ENCODE measurements at regions of chr7 and their contacts with region 1.

Region 1: GRCh38 chr7:73738612-73739374 is at the start of gene ABHD11:
- DNase-seq: peak; percentile 89 to 100
- H3K4me3 ChIP-seq: peak within 1 kb of the TSS; percentile 96
- H3K27ac ChIP-seq: peak within 1 kb of the TSS; percentile 100
- H3K4me1 ChIP-seq: peaks cover 71% of the 10 kb centered on the region
- H3K27me3 ChIP-seq: no peaks in the 10 kb centered on the region
- CTCF ChIP-seq: no peak
- total RNA-seq, gene ABHD11: 74.4 and 92.6 TPM in 2 replicates

Region 2: GRCh38 chr7:73329861-73330581 is 408.8 kb before region 1 on chr7:
- CTCF ChIA-PET with region 1: no interaction called
- POLR2A ChIA-PET with region 1: no interaction called
- intact Hi-C with region 1: no loop called
- DNase-seq: no peak
- H3K4me3 ChIP-seq: no peak overlapping the region
- H3K27ac ChIP-seq: no peak overlapping the region
- H3K4me1 ChIP-seq: no peaks in the 10 kb centered on the region
- H3K27me3 ChIP-seq: no peaks in the 10 kb centered on the region
- CTCF ChIP-seq: no peak

Region 3: GRCh38 chr7:73621168-73622063 is 117.4 kb before region 1 on chr7:
- CTCF ChIA-PET with region 1: no interaction called
- POLR2A ChIA-PET with region 1: interaction called, 36 read pairs
- intact Hi-C with region 1: no loop called
- DNase-seq: no peak
- H3K4me3 ChIP-seq: no peak overlapping the region
- H3K27ac ChIP-seq: no peak overlapping the region
- H3K4me1 ChIP-seq: no peaks in the 10 kb centered on the region
- H3K27me3 ChIP-seq: no peaks in the 10 kb centered on the region
- CTCF ChIP-seq: no peak

Region 4: DNA sequence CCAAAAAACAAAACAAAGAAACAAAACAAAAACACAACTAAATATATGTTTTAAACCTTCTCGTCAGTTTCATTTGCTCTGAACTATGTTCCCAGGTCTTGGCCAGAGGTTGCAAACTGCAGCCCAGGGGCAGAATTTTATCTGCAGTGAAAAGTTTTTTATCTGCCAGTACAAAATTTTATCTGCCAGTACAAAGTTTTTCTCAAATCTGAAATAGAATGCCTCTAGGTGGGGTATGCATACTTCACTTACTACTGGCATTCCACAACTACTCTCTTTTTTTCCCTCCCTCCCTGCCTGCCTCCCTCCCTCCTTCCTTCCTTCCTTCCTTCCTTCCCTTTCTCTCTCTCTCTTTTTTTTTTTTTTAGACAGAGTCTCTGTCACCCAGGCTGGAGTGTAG is 40.7 kb after region 1 on chr7:
- CTCF ChIA-PET with region 1: interaction called, 3 read pairs
- POLR2A ChIA-PET with region 1: interaction called, 23 read pairs
- intact Hi-C with region 1: no loop called
- DNase-seq: no peak
- H3K4me3 ChIP-seq: no peak overlapping the region
- H3K27ac ChIP-seq: no peak overlapping the region
- H3K4me1 ChIP-seq: peaks cover 7% of the 10 kb centered on the region
- H3K27me3 ChIP-seq: no peaks in the 10 kb centered on the region
- CTCF ChIP-seq: no peak

Region 5: DNA sequence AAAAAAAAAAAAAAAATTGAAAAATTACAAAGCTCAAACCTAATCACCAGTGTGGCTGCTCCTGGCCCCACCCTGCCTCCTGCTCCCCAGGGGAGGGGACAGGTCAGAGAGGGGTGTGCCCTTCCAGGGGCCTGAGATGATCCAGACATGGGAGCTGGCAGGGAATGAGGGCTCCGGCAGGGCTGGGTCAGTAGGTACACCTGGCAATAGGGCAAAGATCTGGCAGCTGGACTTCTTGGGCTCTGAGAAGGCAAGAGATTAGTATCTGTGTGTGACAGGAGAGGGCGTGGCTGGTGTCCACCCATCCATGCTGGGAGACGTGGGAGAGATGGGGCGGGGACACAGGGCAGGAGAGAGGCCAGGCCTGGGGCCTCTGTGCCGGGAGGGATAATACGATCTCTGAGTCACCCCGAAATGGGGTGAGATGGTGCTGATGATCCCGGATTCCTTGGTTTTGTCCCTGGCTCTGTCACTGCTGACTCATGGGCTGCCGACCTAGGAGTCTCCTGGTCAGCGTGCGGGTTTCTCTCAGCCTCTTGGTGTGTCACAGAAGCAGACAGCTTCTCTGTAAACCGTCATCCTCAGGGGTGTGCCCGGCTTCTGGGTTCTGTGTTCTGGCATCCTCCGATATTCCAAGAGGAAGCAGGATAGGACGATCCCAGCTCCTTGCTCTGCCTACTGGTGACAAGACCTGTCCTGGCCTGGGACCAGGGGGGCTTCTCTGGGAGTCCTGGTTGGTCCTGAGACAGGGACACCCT is 83.7 kb after region 1 on chr7:
- CTCF ChIA-PET with region 1: interaction called, 7 read pairs
- POLR2A ChIA-PET with region 1: interaction called, 46 read pairs
- intact Hi-C with region 1: loop called (anchors 1 kb)
- DNase-seq: peak; percentile 99
- H3K4me3 ChIP-seq: no peak overlapping the region
- H3K27ac ChIP-seq: peak overlapping the region; percentile 99
- H3K4me1 ChIP-seq: peaks cover 62% of the 10 kb centered on the region
- H3K27me3 ChIP-seq: no peaks in the 10 kb centered on the region
- CTCF ChIP-seq: no peak

Region 6: DNA sequence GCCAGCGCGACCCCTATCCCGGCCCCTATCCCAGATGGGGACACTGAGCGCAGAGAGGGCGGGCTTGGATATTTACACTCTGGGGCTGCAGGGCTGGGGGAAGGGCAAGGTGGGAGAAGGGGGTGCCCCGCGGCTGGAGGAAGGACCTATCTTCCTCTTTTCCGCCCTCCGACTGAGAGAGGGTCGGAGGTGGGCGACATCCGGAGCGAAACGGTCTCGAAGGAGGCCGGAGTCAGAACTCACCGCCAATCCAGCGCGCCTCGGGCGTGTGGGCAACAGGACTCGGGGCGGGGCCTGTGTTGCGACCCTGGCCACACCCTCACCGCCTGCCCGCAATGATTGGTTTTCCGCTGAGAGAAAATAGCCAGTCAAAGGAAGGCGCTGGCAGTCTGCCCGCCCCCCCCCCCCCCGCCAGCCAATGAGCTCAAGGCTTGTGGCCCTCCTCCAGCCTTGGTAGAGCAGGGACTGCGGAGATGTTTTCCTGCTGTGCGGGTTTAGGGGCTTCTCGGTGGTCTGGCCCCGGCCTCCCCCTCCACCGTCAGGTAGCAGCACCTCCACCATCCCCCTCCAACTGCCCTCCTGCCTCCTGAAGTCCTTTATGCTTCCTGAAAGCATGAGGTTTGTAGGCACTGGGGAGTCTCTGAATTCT is 103.6 kb after region 1 on chr7 and contains the start of gene METTL27:
- CTCF ChIA-PET with region 1: no interaction called
- POLR2A ChIA-PET with region 1: interaction called, 20 read pairs
- intact Hi-C with region 1: no loop called
- DNase-seq: peak; percentile 79 to 97
- H3K4me3 ChIP-seq: peak within 1 kb of the TSS; percentile 84
- H3K27ac ChIP-seq: peak within 1 kb of the TSS; percentile 59
- H3K4me1 ChIP-seq: peaks cover 20% of the 10 kb centered on the region
- H3K27me3 ChIP-seq: no peaks in the 10 kb centered on the region
- CTCF ChIP-seq: no peak
- total RNA-seq, gene METTL27: 23.2 and 34.7 TPM in 2 replicates

Measured in PC-9 (cell line).